ENCODE measurements at regions of chr14 and their contacts with region 1.

Region 1: GRCh38 chr14:101235335-101236103 is 325.8 kb upstream of the DIO3 start:
- DNase-seq: peak; percentile 55
- H3K4me3 ChIP-seq: no peak overlapping the region
- H3K27ac ChIP-seq: no peak overlapping the region
- H3K4me1 ChIP-seq: no peaks in the 10 kb centered on the region
- H3K27me3 ChIP-seq: no peaks in the 10 kb centered on the region
- CTCF ChIP-seq: peak; percentile 79 to 95
- POLR2A ChIP-seq: no peak

Region 2: GRCh38 chr14:100709289-100710284 is 525.9 kb before region 1 on chr14:
- CTCF ChIA-PET with region 1: interaction called, 11 read pairs
- POLR2A ChIA-PET with region 1: no interaction called
- dilution Hi-C with region 1: no loop called
- intact Hi-C with region 1: no loop called
- DNase-seq: peak; percentile 24
- H3K4me3 ChIP-seq: no peak overlapping the region
- H3K27ac ChIP-seq: no peak overlapping the region
- H3K4me1 ChIP-seq: peaks cover 5% of the 10 kb centered on the region
- H3K27me3 ChIP-seq: no peaks in the 10 kb centered on the region
- CTCF ChIP-seq: peak; percentile 13 to 58
- POLR2A ChIP-seq: no peak

Region 3: GRCh38 chr14:100900837-100901390 is 334.6 kb before region 1 on chr14:
- CTCF ChIA-PET with region 1: interaction called, 41 read pairs
- POLR2A ChIA-PET with region 1: no interaction called
- dilution Hi-C with region 1: no loop called
- intact Hi-C with region 1: loop called (anchors 1 kb)
- DNase-seq: peak; percentile 8
- H3K4me3 ChIP-seq: no peak overlapping the region
- H3K27ac ChIP-seq: no peak overlapping the region
- H3K4me1 ChIP-seq: peaks cover 13% of the 10 kb centered on the region
- H3K27me3 ChIP-seq: peaks cover 3 to 6% of the 10 kb centered on the region in 2 experiments
- CTCF ChIP-seq: peak; percentile 8 to 42
- POLR2A ChIP-seq: no peak

Region 4: GRCh38 chr14:101301011-101301410 is 65.5 kb after region 1 on chr14:
- CTCF ChIA-PET with region 1: no interaction called
- POLR2A ChIA-PET with region 1: no interaction called
- dilution Hi-C with region 1: no loop called
- intact Hi-C with region 1: loop called (anchors 2 kb)
- DNase-seq: no peak
- H3K4me3 ChIP-seq: no peak overlapping the region
- H3K27ac ChIP-seq: no peak overlapping the region
- H3K4me1 ChIP-seq: no peaks in the 10 kb centered on the region
- H3K27me3 ChIP-seq: peaks cover 2 to 6% of the 10 kb centered on the region in 2 experiments
- CTCF ChIP-seq: no peak
- POLR2A ChIP-seq: no peak